ENCODE measurements at regions of chr19 and their contacts with region 1.

Region 1: GRCh38 chr19:29731331-29731850 is 16.3 kb upstream of the C19orf12 start:
- DNase-seq: no peak
- H3K4me3 ChIP-seq: no peak overlapping the region
- H3K27ac ChIP-seq: no peak overlapping the region
- H3K4me1 ChIP-seq: no peaks in the 10 kb centered on the region
- H3K27me3 ChIP-seq: no peaks in the 10 kb centered on the region
- CTCF ChIP-seq: no peak
- EP300 ChIP-seq: no peak
- POLR2A ChIP-seq: no peak
- RAD21 ChIP-seq: no peak

Region 2: GRCh38 chr19:29745253-29745652 is 13.9 kb after region 1 on chr19:
- CTCF ChIA-PET with region 1: interaction called, 26 read pairs
- POLR2A ChIA-PET with region 1: no interaction called
- DNase-seq: peak in 1 of 2 experiments; percentile 68
- H3K4me3 ChIP-seq: no peak overlapping the region
- H3K27ac ChIP-seq: no peak overlapping the region
- H3K4me1 ChIP-seq: no peaks in the 10 kb centered on the region; a peak in 2 of 7 replicates
- H3K27me3 ChIP-seq: no peaks in the 10 kb centered on the region
- CTCF ChIP-seq: peak; percentile 65 to 85 (median 75)
- EP300 ChIP-seq: no peak
- POLR2A ChIP-seq: no peak
- RAD21 ChIP-seq: peak; percentile 25 to 43; a peak in 3 of 4 replicates